Activated CD4-positive, alpha-beta memory T cell treated with anti-CD3 and anti-CD28 coated beads for 36 hours (primary cell): ENCODE measurements at regions of chr7 and their contacts with region 1.

Region 1: GRCh38 chr7:28921822-28922221 is 36.3 kb downstream of the TRIL start:
- DNase-seq: peak; percentile 39
- H3K4me3 Mint-ChIP-seq: no peak overlapping the region
- H3K27ac Mint-ChIP-seq: no peak overlapping the region
- H3K4me1 Mint-ChIP-seq: peaks cover 14% of the 10 kb centered on the region
- H3K27me3 Mint-ChIP-seq: peaks cover 10% of the 10 kb centered on the region

Region 2: DNA sequence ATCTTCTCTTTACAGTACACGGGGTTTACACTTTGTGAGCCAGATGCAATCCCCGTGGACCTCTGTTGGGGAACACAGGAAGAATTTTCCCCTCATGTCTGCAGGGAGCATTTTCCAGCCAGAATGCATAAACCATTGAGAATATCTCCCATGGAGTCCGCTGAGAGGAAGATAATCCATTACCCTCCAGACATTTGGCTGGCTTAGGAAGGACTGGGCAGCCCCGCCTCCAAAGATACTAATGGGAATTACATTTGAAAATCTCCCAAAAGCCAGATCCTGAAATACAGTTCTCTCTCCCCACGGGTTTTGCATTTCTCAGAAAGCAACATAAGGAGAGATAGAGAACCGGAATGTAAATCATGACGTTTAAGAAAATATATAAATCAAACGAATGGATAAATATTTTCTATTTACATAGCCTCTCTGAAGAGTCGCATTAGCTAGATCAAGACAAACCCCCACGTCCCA is 17.2 kb before region 1 on chr7:
- CTCF ChIA-PET with region 1: interaction called, 48 read pairs
- POLR2A ChIA-PET with region 1: no interaction called
- intact Hi-C with region 1: no loop called
- DNase-seq: no peak
- H3K4me3 Mint-ChIP-seq: no peak overlapping the region
- H3K27ac Mint-ChIP-seq: no peak overlapping the region
- H3K4me1 Mint-ChIP-seq: no peaks in the 10 kb centered on the region
- H3K27me3 Mint-ChIP-seq: peaks cover 16% of the 10 kb centered on the region

Region 3: DNA sequence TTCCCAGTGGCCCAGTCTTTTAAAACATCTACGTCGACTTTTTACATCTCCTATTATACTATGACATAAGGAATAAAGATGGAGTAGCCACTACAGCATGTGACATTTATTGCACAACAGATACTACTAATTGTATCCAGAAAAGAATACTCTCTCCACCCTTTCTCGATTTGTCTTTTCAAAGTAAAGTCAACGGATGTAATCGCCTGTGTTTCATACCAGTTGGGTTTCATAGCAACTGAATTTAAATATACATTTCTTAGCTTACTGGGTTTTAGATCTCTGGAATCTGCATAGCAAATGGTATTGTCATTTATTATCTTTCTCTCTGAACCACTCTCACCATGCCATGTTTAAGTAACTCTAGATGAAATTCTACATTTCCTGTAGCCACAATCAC is 122.7 kb after region 1 on chr7:
- CTCF ChIA-PET with region 1: no interaction called
- POLR2A ChIA-PET with region 1: no interaction called
- intact Hi-C with region 1: no loop called
- DNase-seq: no peak
- H3K4me3 Mint-ChIP-seq: no peak overlapping the region
- H3K27ac Mint-ChIP-seq: no peak overlapping the region
- H3K4me1 Mint-ChIP-seq: no peaks in the 10 kb centered on the region
- H3K27me3 Mint-ChIP-seq: peaks cover 16% of the 10 kb centered on the region

Region 4: DNA sequence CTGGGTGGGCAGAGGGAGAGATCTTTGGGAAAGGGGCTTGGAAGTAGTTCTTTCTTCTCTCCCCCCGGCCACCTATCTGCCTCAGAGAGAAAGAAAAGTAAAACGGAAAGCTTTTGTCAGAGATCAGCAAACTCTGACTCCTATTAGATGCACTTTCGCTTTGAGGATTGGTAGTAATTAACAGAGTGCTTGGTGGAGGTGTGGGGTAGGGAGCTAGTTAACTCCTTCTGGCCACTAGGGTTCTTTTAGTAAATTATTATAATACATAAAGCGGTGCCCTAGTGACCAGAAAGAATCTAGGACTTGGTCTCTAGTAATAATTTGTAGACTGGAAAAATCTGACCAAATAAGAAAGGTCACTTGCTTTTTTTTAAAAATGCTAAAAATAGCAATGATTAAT is 169.9 kb after region 1 on chr7:
- CTCF ChIA-PET with region 1: interaction called, 150 read pairs
- POLR2A ChIA-PET with region 1: no interaction called
- intact Hi-C with region 1: no loop called
- DNase-seq: peak; percentile 12
- H3K4me3 Mint-ChIP-seq: peak overlapping the region; percentile 75
- H3K27ac Mint-ChIP-seq: peak overlapping the region; percentile 75
- H3K4me1 Mint-ChIP-seq: peaks cover 14% of the 10 kb centered on the region
- H3K27me3 Mint-ChIP-seq: peaks cover 2% of the 10 kb centered on the region

Region 5: GRCh38 chr7:29113384-29114103 is 191.7 kb after region 1 on chr7:
- CTCF ChIA-PET with region 1: interaction called, 231 read pairs
- POLR2A ChIA-PET with region 1: no interaction called
- intact Hi-C with region 1: no loop called
- DNase-seq: peak; percentile 36
- H3K4me3 Mint-ChIP-seq: no peak overlapping the region
- H3K27ac Mint-ChIP-seq: no peak overlapping the region
- H3K4me1 Mint-ChIP-seq: peaks cover 11% of the 10 kb centered on the region
- H3K27me3 Mint-ChIP-seq: peaks cover 22% of the 10 kb centered on the region

Region 6: GRCh38 chr7:29408841-29409243 is 487.0 kb after region 1 on chr7:
- CTCF ChIA-PET with region 1: interaction called, 230 read pairs
- POLR2A ChIA-PET with region 1: no interaction called
- intact Hi-C with region 1: loop called (anchors 1 kb)
- DNase-seq: peak; percentile 41
- H3K4me3 Mint-ChIP-seq: no peak overlapping the region
- H3K27ac Mint-ChIP-seq: no peak overlapping the region
- H3K4me1 Mint-ChIP-seq: no peaks in the 10 kb centered on the region
- H3K27me3 Mint-ChIP-seq: peaks cover 3% of the 10 kb centered on the region